ENCODE measurements at regions of chr3 and their contacts with region 1.

Region 1: DNA sequence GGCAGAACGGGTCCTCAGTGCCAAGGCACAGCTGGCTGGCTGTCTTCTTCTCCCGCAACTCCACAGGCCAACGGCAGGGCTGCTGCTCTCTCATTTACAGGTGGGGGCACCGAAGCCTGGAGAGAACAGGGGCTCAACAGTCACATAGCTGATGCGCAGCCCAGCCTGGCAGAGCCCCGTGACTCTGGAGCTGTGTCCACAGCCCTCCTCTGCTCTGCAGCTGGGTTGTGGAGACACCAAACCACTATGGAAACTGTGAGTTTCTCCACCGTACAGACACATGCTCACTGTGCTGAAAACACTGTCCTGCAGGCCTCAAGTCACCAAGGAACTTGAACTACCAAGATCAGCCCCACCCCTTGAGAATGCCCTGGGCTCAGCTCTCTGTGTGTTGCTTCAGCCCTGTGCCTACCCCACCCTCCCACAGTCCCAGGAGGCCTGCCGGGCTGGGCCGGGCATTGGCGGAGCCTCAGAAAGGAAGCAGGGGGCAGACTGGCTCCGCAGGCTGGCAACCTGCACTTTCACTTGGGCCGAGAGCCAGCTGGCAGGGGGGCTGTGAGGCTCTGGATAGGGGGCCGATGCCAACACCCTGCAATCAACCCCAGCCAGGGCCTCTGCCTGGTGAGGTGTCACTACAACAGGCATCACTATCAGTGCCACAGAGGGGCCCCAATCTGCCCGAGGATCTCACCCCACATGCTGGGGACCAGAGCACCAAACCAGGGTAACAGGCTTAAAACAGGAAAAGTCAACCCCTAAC is 113.7 kb upstream of the RPL32 start:
- DNase-seq: peak; percentile 63 to 90 (median 85)
- H3K4me3 ChIP-seq: peak overlapping the region in 3 of 7 experiments; percentile 38 to 43 (median 43)
- H3K27ac ChIP-seq: no peak overlapping the region
- H3K4me1 ChIP-seq: peaks cover 5 to 67% (median 53%) of the 10 kb centered on the region in 4 experiments
- H3K27me3 ChIP-seq: no peaks in the 10 kb centered on the region

Region 2: GRCh38 chr3:12924437-12924836 is 30.6 kb before region 1 on chr3:
- CTCF ChIA-PET with region 1: no interaction called
- POLR2A ChIA-PET with region 1: no interaction called
- DNase-seq: peak in 2 of 3 donors; percentile 21 to 30
- H3K4me3 ChIP-seq: no peak overlapping the region
- H3K27ac ChIP-seq: no peak overlapping the region
- H3K4me1 ChIP-seq: no peaks in the 10 kb centered on the region
- H3K27me3 ChIP-seq: no peaks in the 10 kb centered on the region

Region 3: GRCh38 chr3:12967606-12968351 is 12.7 kb after region 1 on chr3:
- CTCF ChIA-PET with region 1: interaction called, 400 read pairs
- POLR2A ChIA-PET with region 1: interaction called, 3 read pairs
- DNase-seq: peak; percentile 85 to 93 (median 92)
- H3K4me3 ChIP-seq: peak overlapping the region; percentile 39 to 81 (median 67)
- H3K27ac ChIP-seq: no peak overlapping the region
- H3K4me1 ChIP-seq: peaks cover 3 to 53% (median 40%) of the 10 kb centered on the region in 4 experiments
- H3K27me3 ChIP-seq: no peaks in the 10 kb centered on the region

Region 4: GRCh38 chr3:12994607-12995388 is 39.7 kb after region 1 on chr3:
- CTCF ChIA-PET with region 1: interaction called, 14 read pairs
- POLR2A ChIA-PET with region 1: no interaction called
- DNase-seq: peak; percentile 89 to 92 (median 89)
- H3K4me3 ChIP-seq: peak overlapping the region; percentile 40 to 83 (median 66)
- H3K27ac ChIP-seq: peak overlapping the region in 1 of 2 experiments; percentile 54
- H3K4me1 ChIP-seq: peaks cover 14 to 42% (median 35%) of the 10 kb centered on the region in 4 experiments
- H3K27me3 ChIP-seq: peaks cover 0 to 18% (median 3%) of the 10 kb centered on the region in 5 experiments

Measured in common myeloid progenitor, CD34-positive (primary cell).